Adrenal gland (tissue), 19 donors: ENCODE measurements at regions of chr6 and their contacts with region 1.

Region 1: GRCh38 chr6:36724514-36725390 is 27.1 kb downstream of the RAB44 start:
- DNase-seq: peak; percentile 78 to 93 (median 81)
- H3K4me3 ChIP-seq: no peak overlapping the region
- H3K27ac ChIP-seq: no peak overlapping the region
- H3K4me1 ChIP-seq: no peaks in the 10 kb centered on the region
- H3K27me3 ChIP-seq: no peaks in the 10 kb centered on the region
- CTCF ChIP-seq: peak; percentile 28 to 81 (median 74)
- POLR2A ChIP-seq: no peak

Region 2: GRCh38 chr6:36414481-36414880 is 310.3 kb before region 1 on chr6:
- intact Hi-C with region 1: loop called in 1 of 2 experiments (anchors 10 kb)
- DNase-seq: no peak
- H3K4me3 ChIP-seq: no peak overlapping the region
- H3K27ac ChIP-seq: no peak overlapping the region
- H3K4me1 ChIP-seq: no peaks in the 10 kb centered on the region
- H3K27me3 ChIP-seq: no peaks in the 10 kb centered on the region
- CTCF ChIP-seq: no peak
- POLR2A ChIP-seq: no peak

Region 3: GRCh38 chr6:36423101-36423824 is 301.5 kb before region 1 on chr6:
- intact Hi-C with region 1: loop called (anchors 10 kb)
- DNase-seq: peak; percentile 98 to 100 (median 99)
- H3K4me3 ChIP-seq: peak overlapping the region in 2 of 4 donors; percentile 44 to 70
- H3K27ac ChIP-seq: peak overlapping the region in 4 of 5 donors; percentile 40 to 84 (median 73)
- H3K4me1 ChIP-seq: peaks cover 0 to 10% of the 10 kb centered on the region in 2 donors
- H3K27me3 ChIP-seq: no peaks in the 10 kb centered on the region
- CTCF ChIP-seq: peak; percentile 20 to 75 (median 69)
- POLR2A ChIP-seq: peak; percentile 60 to 73

Region 4: GRCh38 chr6:36615018-36615761 is 109.6 kb before region 1 on chr6:
- intact Hi-C with region 1: loop called in 1 of 2 experiments (anchors 5 kb)
- DNase-seq: peak in 6 of 7 donors; percentile 58 to 76 (median 66)
- H3K4me3 ChIP-seq: no peak overlapping the region
- H3K27ac ChIP-seq: peak overlapping the region in 1 of 5 donors; percentile 1
- H3K4me1 ChIP-seq: peaks cover 0 to 19% of the 10 kb centered on the region in 2 donors
- H3K27me3 ChIP-seq: no peaks in the 10 kb centered on the region
- CTCF ChIP-seq: peak; percentile 43 to 95 (median 76)
- POLR2A ChIP-seq: no peak

Region 5: DNA sequence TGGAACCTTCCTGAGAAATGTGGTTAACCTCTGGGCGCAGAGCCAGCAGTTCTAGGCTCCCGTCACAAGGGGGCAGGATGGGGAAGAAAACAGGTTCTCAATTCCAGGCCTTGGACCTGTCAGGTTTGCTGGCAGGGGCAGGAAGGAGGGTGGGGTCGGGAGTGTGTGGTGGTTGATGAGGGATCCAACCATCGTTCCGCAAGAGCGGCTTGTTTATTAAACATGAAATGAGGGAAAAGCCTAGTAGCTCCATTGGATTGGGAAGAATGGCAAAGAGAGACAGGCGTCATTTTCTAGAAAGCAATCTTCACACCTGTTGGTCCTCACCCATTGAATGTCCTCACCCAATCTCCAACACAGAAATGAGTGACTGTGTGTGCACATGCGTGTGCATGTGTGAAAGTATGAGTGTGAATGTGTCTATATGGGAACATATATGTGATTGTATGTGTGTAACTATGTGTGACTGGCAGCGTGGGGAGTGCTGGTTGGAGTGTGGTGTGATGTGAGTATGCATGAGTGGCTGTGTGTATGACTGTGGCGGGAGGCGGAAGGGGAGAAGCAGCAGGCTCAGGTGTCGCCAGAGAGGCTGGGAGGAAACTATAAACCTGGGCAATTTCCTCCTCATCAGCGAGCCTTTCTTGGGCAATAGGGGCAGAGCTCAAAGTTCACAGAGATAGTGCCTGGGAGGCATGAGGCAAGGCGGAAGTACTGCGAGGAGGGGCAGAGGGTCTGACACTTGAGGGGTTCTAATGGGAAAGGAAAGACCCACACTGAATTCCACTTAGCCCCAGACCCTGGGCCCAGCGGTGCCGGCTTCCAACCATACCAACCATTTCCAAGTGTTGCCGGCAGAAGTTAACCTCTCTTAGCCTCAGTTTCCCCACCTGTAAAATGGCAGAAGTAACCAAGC is 100.9 kb before region 1 on chr6:
- intact Hi-C with region 1: loop called (anchors 2 to 5 kb)
- DNase-seq: peak; percentile 85 to 95 (median 90)
- H3K4me3 ChIP-seq: no peak overlapping the region
- H3K27ac ChIP-seq: no peak overlapping the region
- H3K4me1 ChIP-seq: peaks cover 8 to 38% of the 10 kb centered on the region in 2 donors
- H3K27me3 ChIP-seq: no peaks in the 10 kb centered on the region
- CTCF ChIP-seq: peak; percentile 75 to 93 (median 88)
- POLR2A ChIP-seq: no peak

Region 6: DNA sequence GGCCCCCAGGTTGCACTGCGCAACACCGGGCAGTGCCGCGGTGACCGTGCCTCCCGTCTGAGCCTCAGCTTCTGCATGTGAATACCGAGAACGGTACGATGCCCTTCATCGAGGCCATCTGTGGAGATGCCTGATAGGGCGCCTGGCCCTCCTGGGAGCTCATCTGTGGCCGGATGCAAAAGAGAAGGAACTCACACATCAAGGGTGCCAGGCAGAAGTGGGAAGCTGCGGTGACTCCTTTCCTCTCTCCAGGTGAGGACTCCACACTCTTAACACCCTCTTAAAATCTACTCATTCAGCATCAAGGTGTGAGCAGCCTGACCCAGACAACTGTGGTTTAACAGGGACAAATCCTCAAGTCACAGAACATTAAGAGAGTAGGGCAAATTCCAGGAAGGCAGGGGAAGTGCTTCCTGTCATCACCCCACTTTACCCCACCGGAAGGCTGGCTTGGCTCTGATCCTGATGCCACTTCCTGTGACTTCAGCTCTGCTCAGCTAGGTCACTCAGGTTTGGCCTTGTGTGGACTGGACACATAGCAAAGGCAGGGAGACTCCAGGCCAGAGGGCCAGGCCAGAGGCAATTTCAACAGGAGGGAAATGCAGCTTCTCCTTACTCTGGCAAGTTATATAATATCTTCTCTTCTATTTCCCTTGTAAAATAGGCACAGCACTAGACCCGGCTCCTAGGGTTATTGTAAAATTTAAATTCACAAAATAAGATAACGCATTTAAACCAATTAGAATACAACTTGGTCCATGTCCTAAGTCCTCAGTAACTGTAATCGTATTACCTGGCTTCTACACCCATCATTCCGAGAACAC is 45.1 kb after region 1 on chr6:
- intact Hi-C with region 1: no loop called
- DNase-seq: peak in 4 of 7 donors; percentile 30 to 36 (median 32)
- H3K4me3 ChIP-seq: no peak overlapping the region
- H3K27ac ChIP-seq: peak overlapping the region in 1 of 5 donors; percentile 2
- H3K4me1 ChIP-seq: peaks cover 0 to 6% of the 10 kb centered on the region in 2 donors
- H3K27me3 ChIP-seq: no peaks in the 10 kb centered on the region
- CTCF ChIP-seq: no peak
- POLR2A ChIP-seq: no peak